GM13977 (cell line): ENCODE measurements at regions of chr7 and their contacts with region 1.

Region 1: GRCh38 chr7:47827351-47827756 is 120.9 kb downstream of the PKD1L1 start:
- DNase-seq: no peak
- CTCF ChIP-seq: no peak

Region 2: DNA sequence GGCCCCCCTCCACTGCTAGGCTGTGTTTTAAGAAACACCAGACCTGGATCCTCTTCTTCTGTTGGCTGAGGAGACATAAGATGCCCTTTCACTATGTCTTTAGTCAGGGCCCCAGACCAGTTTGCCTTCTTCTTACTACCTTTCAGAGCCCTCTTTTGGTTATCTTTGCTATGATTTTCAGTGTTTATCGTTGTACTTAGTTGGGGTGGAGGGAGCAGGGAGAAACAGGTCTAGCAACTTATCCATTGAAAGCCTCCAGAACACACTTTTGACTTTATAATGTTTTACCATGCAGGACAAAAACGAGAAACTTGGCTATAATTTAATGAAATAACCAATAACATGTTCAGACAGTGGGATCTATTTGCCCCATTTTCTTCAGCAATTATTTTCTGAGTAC is 770.6 kb before region 1 on chr7:
- in situ Hi-C with region 1: no loop called
- DNase-seq: no peak
- CTCF ChIP-seq: no peak

Region 3: GRCh38 chr7:47266131-47266706 is 561.1 kb before region 1 on chr7:
- in situ Hi-C with region 1: loop called (anchors 10 kb)
- DNase-seq: peak; percentile 65
- CTCF ChIP-seq: peak; percentile 90

Region 4: GRCh38 chr7:49112222-49112621 is 1284.9 kb after region 1 on chr7:
- in situ Hi-C with region 1: no loop called
- DNase-seq: no peak
- CTCF ChIP-seq: no peak